ENCODE measurements at regions of chr10 and their contacts with region 1.

Region 1: GRCh38 chr10:119859420-119860258 is 13.0 kb downstream of the MCMBP start:
- DNase-seq: no peak
- ATAC-seq: no peak

Region 2: DNA sequence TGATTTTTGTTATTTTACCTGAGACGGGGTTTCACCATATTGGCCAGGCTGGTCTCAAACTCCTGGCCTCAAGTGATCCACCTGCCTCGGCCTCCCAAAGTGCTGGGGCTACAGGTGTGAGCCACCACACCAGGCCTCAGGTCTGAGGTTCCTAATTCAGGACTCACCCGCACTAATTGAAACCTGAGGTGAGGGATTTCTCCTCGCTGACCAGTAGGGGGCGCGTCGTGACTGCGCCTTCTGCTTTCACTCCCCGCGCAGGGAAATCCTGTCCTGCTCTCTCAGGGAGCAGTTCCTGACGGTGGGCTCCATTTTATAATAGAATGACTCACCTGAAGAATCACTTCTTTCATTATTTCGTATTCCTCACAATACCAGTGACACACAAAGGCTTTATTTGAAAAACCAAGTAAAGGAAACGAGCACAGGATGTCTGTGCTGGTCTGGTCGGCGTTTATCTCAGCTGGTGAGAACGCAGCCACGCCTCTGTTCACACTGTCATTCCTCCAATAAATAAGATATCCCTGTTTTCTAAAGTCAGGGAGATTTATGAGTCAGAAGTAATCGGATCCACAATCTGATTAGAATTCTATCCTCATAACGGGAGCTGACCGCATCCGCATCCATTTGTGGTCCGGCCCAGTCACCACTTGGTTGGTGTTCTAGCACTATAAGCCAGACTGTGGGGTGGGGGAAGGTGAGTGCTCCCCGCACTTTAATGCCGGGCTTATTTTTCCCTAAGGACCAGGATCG is 173.0 kb before region 1 on chr10:
- intact Hi-C with region 1: loop called (anchors 5 kb)
- DNase-seq: peak; percentile 78
- ATAC-seq: peak; percentile 94

Region 3: GRCh38 chr10:119725828-119726675 is 133.6 kb before region 1 on chr10 and contains the start of gene INPP5F:
- intact Hi-C with region 1: no loop called
- DNase-seq: peak; percentile 99
- ATAC-seq: peak; percentile 99
- total RNA-seq, gene INPP5F: 4.5 TPM

Region 4: GRCh38 chr10:119750391-119751230 is 109.0 kb before region 1 on chr10:
- intact Hi-C with region 1: loop called (anchors 10 kb)
- DNase-seq: peak; percentile 60
- ATAC-seq: peak; percentile 91

Region 5: GRCh38 chr10:119784340-119785070 is 75.1 kb before region 1 on chr10:
- intact Hi-C with region 1: no loop called
- DNase-seq: no peak
- ATAC-seq: no peak

Region 6: DNA sequence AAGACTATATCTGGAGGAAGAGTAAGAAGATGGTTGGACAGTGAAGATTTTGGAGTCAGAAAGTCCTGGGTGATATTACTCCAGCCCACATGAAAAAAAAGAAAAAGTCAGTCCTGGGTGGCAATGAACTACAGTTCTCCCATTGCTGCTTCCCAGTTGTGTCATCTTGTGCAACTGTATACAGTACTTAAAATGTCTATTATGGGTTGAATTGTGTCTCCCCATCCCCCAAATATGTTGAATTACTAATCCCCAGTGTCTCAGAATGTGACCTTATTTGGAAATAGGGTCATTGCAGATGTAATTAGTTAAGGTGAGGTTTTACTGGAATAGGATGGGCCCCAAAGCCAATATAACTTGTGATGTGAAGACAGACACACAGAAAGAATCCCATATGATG is 48.5 kb after region 1 on chr10:
- intact Hi-C with region 1: no loop called
- DNase-seq: no peak
- ATAC-seq: no peak

Measured in Right ventricle myocardium superior (tissue), 1 donor.